Breast epithelium (tissue), 4 donors: ENCODE measurements at regions of chr4 and their contacts with region 1.

Region 1: GRCh38 chr4:37837446-37837845 is 11.0 kb downstream of the PGM2 start:
- DNase-seq: no peak
- H3K4me3 ChIP-seq: no peak overlapping the region
- H3K27ac ChIP-seq: peak overlapping the region in 1 of 2 donors; percentile 21
- H3K4me1 ChIP-seq: no peaks in the 10 kb centered on the region
- H3K27me3 ChIP-seq: no peaks in the 10 kb centered on the region
- CTCF ChIP-seq: no peak
- POLR2A ChIP-seq: no peak

Region 2: GRCh38 chr4:37400241-37400881 is 437.1 kb before region 1 on chr4:
- intact Hi-C with region 1: loop called (anchors 5 kb)
- DNase-seq: no peak
- H3K4me3 ChIP-seq: no peak overlapping the region
- H3K27ac ChIP-seq: no peak overlapping the region
- H3K4me1 ChIP-seq: no peaks in the 10 kb centered on the region
- H3K27me3 ChIP-seq: no peaks in the 10 kb centered on the region
- CTCF ChIP-seq: no peak
- POLR2A ChIP-seq: no peak

Region 3: GRCh38 chr4:37802068-37802666 is 35.3 kb before region 1 on chr4:
- intact Hi-C with region 1: no loop called
- DNase-seq: peak; percentile 46 to 55
- H3K4me3 ChIP-seq: no peak overlapping the region
- H3K27ac ChIP-seq: no peak overlapping the region
- H3K4me1 ChIP-seq: no peaks in the 10 kb centered on the region
- H3K27me3 ChIP-seq: no peaks in the 10 kb centered on the region
- CTCF ChIP-seq: peak in 2 of 3 donors; percentile 51 to 73
- POLR2A ChIP-seq: no peak

Region 4: GRCh38 chr4:37864786-37865185 is 27.3 kb after region 1 on chr4:
- intact Hi-C with region 1: no loop called
- DNase-seq: no peak
- H3K4me3 ChIP-seq: no peak overlapping the region
- H3K27ac ChIP-seq: no peak overlapping the region
- H3K4me1 ChIP-seq: no peaks in the 10 kb centered on the region
- H3K27me3 ChIP-seq: no peaks in the 10 kb centered on the region
- CTCF ChIP-seq: no peak
- POLR2A ChIP-seq: no peak